ENCODE measurements at regions of chr5 and their contacts with region 1.

Region 1: GRCh38 chr5:121968910-121969607 is 7.3 kb downstream of the SRFBP1 start:
- DNase-seq: no peak
- H3K4me3 ChIP-seq: no peak overlapping the region
- H3K27ac ChIP-seq: peak overlapping the region; percentile 48 to 70 (median 54)
- H3K4me1 ChIP-seq: peaks cover 0 to 20% (median 12%) of the 10 kb centered on the region in 4 donors
- H3K27me3 ChIP-seq: no peaks in the 10 kb centered on the region
- CTCF ChIP-seq: no peak
- EP300 ChIP-seq: no peak
- POLR2A ChIP-seq: no peak

Region 2: GRCh38 chr5:122076664-122077365 is 107.8 kb after region 1 on chr5:
- in situ Hi-C with region 1: no loop called
- intact Hi-C with region 1: loop called (anchors 10 kb)
- DNase-seq: peak; percentile 81
- H3K4me3 ChIP-seq: peak overlapping the region; percentile 33 to 63 (median 48)
- H3K27ac ChIP-seq: peak overlapping the region; percentile 60 to 72 (median 70)
- H3K4me1 ChIP-seq: peaks cover 0 to 27% (median 22%) of the 10 kb centered on the region in 4 donors
- H3K27me3 ChIP-seq: peaks cover 33% of the 10 kb centered on the region
- CTCF ChIP-seq: peak; percentile 47 to 70 (median 67)
- EP300 ChIP-seq: no peak
- POLR2A ChIP-seq: no peak

Region 3: GRCh38 chr5:122492664-122493063 is 523.6 kb after region 1 on chr5:
- in situ Hi-C with region 1: no loop called
- intact Hi-C with region 1: no loop called
- DNase-seq: no peak
- H3K4me3 ChIP-seq: no peak overlapping the region
- H3K27ac ChIP-seq: no peak overlapping the region
- H3K4me1 ChIP-seq: no peaks in the 10 kb centered on the region
- H3K27me3 ChIP-seq: no peaks in the 10 kb centered on the region
- CTCF ChIP-seq: peak in 3 of 5 experiments; percentile 11 to 19 (median 15)
- EP300 ChIP-seq: no peak
- POLR2A ChIP-seq: no peak

Measured in transverse colon (tissue), 4 donors.